ENCODE measurements at regions of chr2 and their contacts with region 1.

Region 1: DNA sequence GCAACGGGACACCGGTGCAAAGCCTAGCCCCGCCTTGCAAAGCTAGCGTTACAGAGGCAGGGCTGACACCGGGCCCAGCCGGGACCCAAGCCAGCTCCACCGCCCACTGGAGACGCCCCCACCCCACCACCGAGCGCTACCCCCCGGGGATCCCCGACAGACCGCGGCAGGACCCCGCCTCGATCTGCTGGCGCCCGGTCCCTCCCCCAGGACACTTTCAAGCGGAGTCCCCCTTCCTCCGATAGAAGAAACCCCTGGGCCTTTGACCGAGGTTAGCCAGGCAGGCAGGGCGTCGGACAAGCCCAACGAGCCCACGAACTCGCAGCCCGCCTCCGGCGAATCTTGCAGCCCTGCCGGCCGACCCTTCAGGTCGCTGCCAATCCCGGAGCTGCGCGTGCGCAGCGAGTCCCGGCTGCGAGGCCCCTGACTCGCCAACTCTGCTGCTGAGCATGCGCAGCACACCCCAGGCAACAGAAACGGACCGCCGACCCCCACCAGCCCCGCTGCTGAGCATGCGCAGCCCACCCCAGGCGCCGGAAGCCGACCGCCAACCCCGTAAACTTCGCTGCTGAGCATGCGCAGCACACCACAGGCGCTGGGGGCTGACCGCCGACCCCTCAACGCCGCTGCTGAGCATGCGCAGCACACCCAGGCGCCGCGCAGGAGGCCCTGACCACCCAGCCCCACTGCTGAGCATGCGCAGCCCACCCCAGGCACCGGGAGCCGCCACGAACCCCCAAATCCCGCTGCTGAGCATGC is 656 bp downstream of the ADI1 start:
- DNase-seq: peak; percentile 96 to 99 (median 98)
- ATAC-seq: peak; percentile 83
- H3K4me3 ChIP-seq: peak overlapping the region; percentile 89
- H3K4me3 Mint-ChIP-seq: peak overlapping the region; percentile 83 to 96 (median 92)
- H3K27ac ChIP-seq: peak overlapping the region; percentile 96
- H3K27ac Mint-ChIP-seq: peak overlapping the region; percentile 84 to 96 (median 93)
- H3K4me1 ChIP-seq: peaks cover 18% of the 10 kb centered on the region in 2 donors
- H3K4me1 Mint-ChIP-seq: peaks cover 27 to 59% (median 47%) of the 10 kb centered on the region in 7 donors
- H3K27me3 ChIP-seq: no peaks in the 10 kb centered on the region
- H3K27me3 Mint-ChIP-seq: peaks cover 0 to 2% (median 0%) of the 10 kb centered on the region in 5 donors

Region 2: GRCh38 chr2:3379647-3380534 is 138.8 kb before region 1 on chr2 and contains the start of gene TRAPPC12:
- CTCF ChIA-PET with region 1: no interaction called
- POLR2A ChIA-PET with region 1: interaction called, 11 read pairs
- intact Hi-C with region 1: loop called (anchors 1 kb)
- DNase-seq: peak; percentile 83 to 94 (median 93)
- ATAC-seq: peak; percentile 87
- H3K4me3 ChIP-seq: peak within 1 kb of the TSS; percentile 94
- H3K4me3 Mint-ChIP-seq: peak within 1 kb of the TSS; percentile 96 to 99 (median 98)
- H3K27ac ChIP-seq: peak within 1 kb of the TSS; percentile 87
- H3K27ac Mint-ChIP-seq: peak within 1 kb of the TSS; percentile 94 to 99 (median 99)
- H3K4me1 ChIP-seq: peaks cover 24 to 29% of the 10 kb centered on the region in 2 donors
- H3K4me1 Mint-ChIP-seq: peaks cover 21 to 78% (median 52%) of the 10 kb centered on the region in 7 donors
- H3K27me3 ChIP-seq: no peaks in the 10 kb centered on the region
- H3K27me3 Mint-ChIP-seq: no peaks in the 10 kb centered on the region
- total RNA-seq, gene TRAPPC12: 90.5 to 160 (median 121) TPM

Region 3: GRCh38 chr2:3453190-3454014 is 65.3 kb before region 1 on chr2:
- CTCF ChIA-PET with region 1: no interaction called
- POLR2A ChIA-PET with region 1: no interaction called
- intact Hi-C with region 1: no loop called
- DNase-seq: no peak
- ATAC-seq: no peak
- H3K4me3 ChIP-seq: no peak overlapping the region
- H3K4me3 Mint-ChIP-seq: no peak overlapping the region
- H3K27ac ChIP-seq: no peak overlapping the region
- H3K27ac Mint-ChIP-seq: peak overlapping the region in 2 of 9 donors; percentile 42 to 55
- H3K4me1 ChIP-seq: no peaks in the 10 kb centered on the region
- H3K4me1 Mint-ChIP-seq: peaks cover 0 to 7% (median 0%) of the 10 kb centered on the region in 7 donors
- H3K27me3 ChIP-seq: no peaks in the 10 kb centered on the region
- H3K27me3 Mint-ChIP-seq: no peaks in the 10 kb centered on the region

Region 4: DNA sequence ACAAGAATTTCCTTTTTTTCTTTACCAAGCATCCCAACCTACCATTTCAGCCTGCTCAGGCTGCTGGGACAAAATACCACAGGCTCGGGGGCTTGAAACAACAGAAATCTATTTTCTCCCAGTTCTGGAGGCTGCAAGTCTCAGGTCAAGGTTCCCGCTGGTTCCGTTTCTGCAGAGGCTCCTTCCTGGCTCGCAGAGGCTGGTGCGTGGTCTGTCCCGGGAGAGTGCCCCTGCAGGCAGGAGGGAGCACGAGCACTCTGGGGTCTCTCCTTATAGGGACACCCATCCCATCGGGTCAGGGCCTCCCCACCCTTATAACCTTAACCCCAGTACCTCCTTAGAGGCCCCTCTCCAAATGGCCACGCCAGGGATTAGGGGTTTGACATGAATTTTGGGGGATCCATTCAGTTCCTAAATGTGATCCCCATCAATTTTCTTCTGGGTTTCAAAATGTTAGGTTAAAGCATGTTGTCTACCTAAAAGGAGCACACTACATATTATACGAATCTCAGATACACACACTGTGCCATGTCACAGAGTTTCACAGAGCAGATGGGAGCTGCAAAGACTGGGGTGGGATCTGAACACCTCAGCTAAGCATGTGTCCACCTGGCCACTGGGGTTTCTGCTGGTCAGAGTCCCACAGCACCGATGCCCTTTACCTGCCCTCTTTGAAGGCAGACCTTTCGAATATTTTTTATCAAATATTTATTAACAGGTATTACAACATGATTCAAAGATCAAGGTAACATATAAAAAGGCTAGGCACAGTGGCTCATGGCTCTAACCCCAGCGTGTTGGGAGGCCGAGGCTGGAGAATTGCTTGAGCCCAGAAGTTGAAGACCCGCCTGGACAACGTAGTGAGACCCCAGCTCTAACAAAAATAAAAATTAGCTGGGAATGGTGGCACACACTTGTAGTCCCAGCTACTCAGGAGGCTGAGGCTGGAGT is 18.3 kb after region 1 on chr2:
- CTCF ChIA-PET with region 1: no interaction called
- POLR2A ChIA-PET with region 1: interaction called, 3 read pairs
- intact Hi-C with region 1: loop called in 1 of 2 experiments (anchors 2 kb)
- DNase-seq: no peak
- ATAC-seq: peak; percentile 68
- H3K4me3 ChIP-seq: peak overlapping the region; percentile 41
- H3K4me3 Mint-ChIP-seq: peak overlapping the region; percentile 72 to 84 (median 76)
- H3K27ac ChIP-seq: peak overlapping the region; percentile 42
- H3K27ac Mint-ChIP-seq: peak overlapping the region; percentile 45 to 85 (median 68)
- H3K4me1 ChIP-seq: no peaks in the 10 kb centered on the region
- H3K4me1 Mint-ChIP-seq: peaks cover 0 to 7% (median 3%) of the 10 kb centered on the region in 7 donors
- H3K27me3 ChIP-seq: no peaks in the 10 kb centered on the region
- H3K27me3 Mint-ChIP-seq: no peaks in the 10 kb centered on the region

Region 5: GRCh38 chr2:3575534-3576262 is 57.0 kb after region 1 on chr2:
- CTCF ChIA-PET with region 1: no interaction called
- POLR2A ChIA-PET with region 1: interaction called, 19 read pairs
- intact Hi-C with region 1: loop called (anchors 1 kb)
- DNase-seq: peak in 7 of 9 donors; percentile 24 to 52 (median 33)
- ATAC-seq: peak; percentile 41
- H3K4me3 ChIP-seq: peak overlapping the region; percentile 76
- H3K4me3 Mint-ChIP-seq: peak overlapping the region; percentile 77 to 96 (median 90)
- H3K27ac ChIP-seq: peak overlapping the region; percentile 87
- H3K27ac Mint-ChIP-seq: peak overlapping the region; percentile 84 to 97 (median 92)
- H3K4me1 ChIP-seq: peaks cover 14 to 25% of the 10 kb centered on the region in 2 donors
- H3K4me1 Mint-ChIP-seq: peaks cover 25 to 52% (median 42%) of the 10 kb centered on the region in 7 donors
- H3K27me3 ChIP-seq: no peaks in the 10 kb centered on the region
- H3K27me3 Mint-ChIP-seq: no peaks in the 10 kb centered on the region

Measured in naive thymus-derived CD4-positive, alpha-beta T cell (primary cell).